Dendritic cell treated with granulocyte-macrophage colony-stimulating factor and Interleukin-4, amounts not matched to agents 40 ng/mL and 50 ng/mL, for 4 days (primary cell): ENCODE measurements at regions of chr19 and their contacts with region 1.

Region 1: GRCh38 chr19:16897154-16897855 is 8.5 kb downstream of the F2RL3 start:
- H3K4me3 Mint-ChIP-seq: peak overlapping the region; percentile 68
- H3K27ac Mint-ChIP-seq: peak overlapping the region; percentile 78
- H3K4me1 Mint-ChIP-seq: peaks cover 64% of the 10 kb centered on the region
- H3K27me3 Mint-ChIP-seq: peaks cover 46% of the 10 kb centered on the region

Region 2: GRCh38 chr19:16778796-16779411 is 118.4 kb before region 1 on chr19:
- intact Hi-C with region 1: loop called (anchors 2 kb)
- H3K4me3 Mint-ChIP-seq: no peak overlapping the region
- H3K27ac Mint-ChIP-seq: no peak overlapping the region
- H3K4me1 Mint-ChIP-seq: peaks cover 19% of the 10 kb centered on the region
- H3K27me3 Mint-ChIP-seq: peaks cover 14% of the 10 kb centered on the region

Region 3: DNA sequence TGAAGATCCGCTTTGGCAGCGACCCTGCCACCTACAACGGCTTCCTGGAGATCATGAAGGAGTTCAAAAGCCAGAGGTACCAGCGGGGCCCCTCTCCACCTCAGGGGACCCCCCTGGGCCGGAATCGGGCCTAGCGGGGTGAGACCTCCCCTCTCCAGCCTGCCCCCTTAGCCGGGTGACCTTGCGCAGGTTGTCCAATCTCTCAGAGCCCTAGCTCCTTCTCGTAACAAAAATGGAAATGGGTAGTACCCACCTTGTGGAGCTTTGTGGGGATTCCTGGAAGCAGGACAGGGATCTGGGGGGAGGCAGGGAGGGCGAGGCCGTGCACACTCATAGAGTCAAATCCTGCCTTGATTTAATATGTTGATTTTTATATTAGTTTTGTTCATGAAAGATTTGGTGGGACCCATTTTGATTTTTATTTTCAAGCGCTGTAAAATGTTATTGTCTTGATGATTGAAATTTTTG is 67.4 kb before region 1 on chr19:
- intact Hi-C with region 1: loop called (anchors 5 kb)
- H3K4me3 Mint-ChIP-seq: peak overlapping the region; percentile 82
- H3K27ac Mint-ChIP-seq: peak overlapping the region; percentile 80
- H3K4me1 Mint-ChIP-seq: peaks cover 67% of the 10 kb centered on the region
- H3K27me3 Mint-ChIP-seq: peaks cover 16% of the 10 kb centered on the region

Region 4: DNA sequence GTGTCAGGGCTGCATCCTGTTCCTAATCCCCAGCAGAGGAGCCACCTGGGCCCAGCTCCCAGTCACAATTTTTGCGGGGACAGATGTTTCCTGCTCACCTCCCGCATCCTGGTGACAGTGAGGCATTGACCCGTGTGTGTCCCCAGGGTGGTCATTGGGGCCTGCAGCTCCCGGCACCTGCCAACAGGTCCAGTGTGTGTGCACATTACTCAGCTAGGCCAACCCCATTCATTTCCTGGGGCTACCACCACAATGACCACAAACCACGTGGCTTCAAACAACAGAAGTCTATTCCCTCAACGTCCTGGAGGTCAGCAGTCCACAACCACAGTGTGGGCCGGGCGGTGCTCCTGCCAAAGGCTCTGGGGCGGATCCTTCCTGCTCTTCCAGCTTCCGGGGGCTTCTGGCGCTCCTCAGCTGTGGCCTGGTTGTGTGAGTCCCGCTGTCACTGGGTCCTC is 20.4 kb before region 1 on chr19:
- intact Hi-C with region 1: no loop called
- H3K4me3 Mint-ChIP-seq: no peak overlapping the region
- H3K27ac Mint-ChIP-seq: no peak overlapping the region
- H3K4me1 Mint-ChIP-seq: peaks cover 18% of the 10 kb centered on the region
- H3K27me3 Mint-ChIP-seq: no peaks in the 10 kb centered on the region

Region 5: GRCh38 chr19:16944626-16945363 is 47.5 kb after region 1 on chr19:
- intact Hi-C with region 1: no loop called
- H3K4me3 Mint-ChIP-seq: no peak overlapping the region
- H3K27ac Mint-ChIP-seq: no peak overlapping the region
- H3K4me1 Mint-ChIP-seq: peaks cover 7% of the 10 kb centered on the region
- H3K27me3 Mint-ChIP-seq: peaks cover 10% of the 10 kb centered on the region

Region 6: GRCh38 chr19:17226002-17226933 is 329.0 kb after region 1 on chr19 and contains the start of gene OCEL1:
- intact Hi-C with region 1: loop called (anchors 5 kb)
- H3K4me3 Mint-ChIP-seq: peak within 1 kb of the TSS; percentile 81
- H3K27ac Mint-ChIP-seq: peak within 1 kb of the TSS; percentile 90
- H3K4me1 Mint-ChIP-seq: peaks cover 27% of the 10 kb centered on the region
- H3K27me3 Mint-ChIP-seq: no peaks in the 10 kb centered on the region